Tibial artery (tissue), 4 donors: ENCODE measurements at regions of chr1 and their contacts with region 1.

Region 1: GRCh38 chr1:155277070-155277895 is at the start of gene HCN3:
- DNase-seq: peak; percentile 97 to 98
- H3K4me3 ChIP-seq: peak within 1 kb of the TSS; percentile 59 to 77
- H3K27ac ChIP-seq: peak within 1 kb of the TSS; percentile 60 to 66
- H3K4me1 ChIP-seq: peaks cover 17 to 28% (median 24%) of the 10 kb centered on the region in 4 donors
- H3K27me3 ChIP-seq: no peaks in the 10 kb centered on the region
- CTCF ChIP-seq: peak; percentile 64 to 73

Region 2: GRCh38 chr1:154253671-154254070 is 1023.6 kb before region 1 on chr1:
- intact Hi-C with region 1: no loop called
- DNase-seq: no peak
- H3K4me3 ChIP-seq: no peak overlapping the region
- H3K27ac ChIP-seq: no peak overlapping the region
- H3K4me1 ChIP-seq: no peaks in the 10 kb centered on the region
- H3K27me3 ChIP-seq: no peaks in the 10 kb centered on the region
- CTCF ChIP-seq: no peak

Region 3: GRCh38 chr1:155323798-155324610 is 46.7 kb after region 1 on chr1:
- intact Hi-C with region 1: loop called (anchors 5 kb)
- DNase-seq: peak; percentile 97 to 99
- H3K4me3 ChIP-seq: peak overlapping the region; percentile 65 to 91
- H3K27ac ChIP-seq: peak overlapping the region; percentile 89 to 99
- H3K4me1 ChIP-seq: peaks cover 0 to 51% (median 37%) of the 10 kb centered on the region in 4 donors
- H3K27me3 ChIP-seq: no peaks in the 10 kb centered on the region
- CTCF ChIP-seq: no peak

Region 4: DNA sequence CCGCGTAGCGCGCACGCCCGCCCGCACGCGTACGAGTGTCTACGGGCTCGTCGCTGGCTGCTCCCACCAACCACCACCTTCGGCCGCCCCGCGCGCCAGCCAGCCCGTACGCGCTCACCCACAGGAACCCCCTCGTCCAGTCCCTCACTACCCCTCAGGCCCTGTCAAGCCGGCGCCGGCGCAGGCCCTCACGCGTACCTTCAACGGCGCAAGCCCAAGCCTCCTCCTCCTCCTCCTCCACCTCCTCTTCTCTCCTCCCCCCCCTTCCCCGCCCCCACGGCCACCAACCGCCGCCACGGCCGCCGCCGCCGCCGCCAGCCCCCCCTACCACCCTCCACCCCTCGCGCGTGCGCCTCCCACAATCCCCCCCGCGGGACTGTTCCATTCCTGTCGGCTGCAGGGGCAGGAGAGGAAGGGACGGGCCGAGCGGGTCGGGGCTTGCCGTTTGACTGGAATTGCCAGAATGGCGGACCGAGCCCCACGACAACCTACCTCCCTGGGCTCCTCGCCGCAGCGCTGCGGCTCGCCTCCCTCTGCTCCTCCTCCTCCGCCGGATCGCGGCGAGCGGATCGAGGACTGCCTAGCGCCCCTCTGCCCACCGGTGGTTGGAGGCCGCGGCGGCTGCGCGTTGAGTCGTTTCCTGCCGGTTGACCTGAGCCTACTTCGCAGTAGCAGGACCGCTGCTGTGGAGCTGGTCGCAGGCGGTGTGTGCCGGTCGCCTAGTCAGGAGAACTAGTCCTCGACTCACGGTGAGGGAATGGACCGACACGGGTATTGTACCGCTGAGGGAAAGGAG is 285.5 kb after region 1 on chr1 and contains the start of gene ASH1L:
- intact Hi-C with region 1: loop called (anchors 10 kb)
- DNase-seq: peak; percentile 91 to 97
- H3K4me3 ChIP-seq: peak within 1 kb of the TSS; percentile 95 to 98
- H3K27ac ChIP-seq: peak within 1 kb of the TSS; percentile 96 to 100
- H3K4me1 ChIP-seq: peaks cover 0 to 48% (median 37%) of the 10 kb centered on the region in 4 donors
- H3K27me3 ChIP-seq: no peaks in the 10 kb centered on the region
- CTCF ChIP-seq: peak in 1 of 2 experiments; percentile 26

Region 5: GRCh38 chr1:155591770-155592169 is 314.5 kb after region 1 on chr1:
- intact Hi-C with region 1: loop called (anchors 5 kb)
- DNase-seq: no peak
- H3K4me3 ChIP-seq: no peak overlapping the region
- H3K27ac ChIP-seq: no peak overlapping the region
- H3K4me1 ChIP-seq: no peaks in the 10 kb centered on the region
- H3K27me3 ChIP-seq: no peaks in the 10 kb centered on the region
- CTCF ChIP-seq: peak; percentile 50 to 63